ENCODE measurements at regions of chr22 and their contacts with region 1.

Region 1: DNA sequence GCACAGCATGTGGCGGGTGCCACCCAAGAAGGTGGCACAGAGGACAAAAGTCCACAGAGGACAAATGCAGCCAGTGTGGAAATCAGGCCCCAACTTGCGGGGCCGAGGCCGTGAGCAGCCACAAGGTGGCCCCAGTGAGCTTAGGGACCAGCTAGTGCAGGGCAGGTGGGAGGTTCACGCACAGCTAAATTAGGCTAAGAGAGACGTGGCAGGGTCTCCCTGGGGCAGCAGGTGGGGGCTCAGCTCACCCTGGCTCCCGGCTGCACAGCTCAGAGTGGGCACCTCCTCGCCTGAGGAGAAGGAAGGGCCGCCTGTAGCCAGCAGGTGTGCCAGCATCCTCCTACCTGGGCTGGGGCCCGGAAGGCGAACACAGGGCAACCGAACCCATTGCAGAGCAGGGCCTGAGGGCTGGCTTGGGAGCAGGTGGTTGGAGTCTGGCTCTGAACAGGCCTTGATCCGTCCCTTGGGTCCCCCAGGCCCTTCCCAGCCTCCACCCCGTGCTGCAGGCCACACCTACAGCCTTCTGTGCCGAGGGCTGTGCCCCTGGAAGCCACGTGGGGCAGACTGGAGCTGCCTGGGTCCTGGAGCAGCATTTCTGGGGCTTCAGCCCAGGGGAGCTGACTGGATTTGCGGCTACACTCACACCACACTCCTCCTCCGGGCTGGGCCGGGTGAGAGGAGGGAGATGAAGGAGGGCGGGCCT is 26.1 kb upstream of the CELSR1 start:
- DNase-seq: no peak
- H3K4me3 ChIP-seq: no peak overlapping the region
- CTCF ChIP-seq: peak; percentile 88

Region 2: DNA sequence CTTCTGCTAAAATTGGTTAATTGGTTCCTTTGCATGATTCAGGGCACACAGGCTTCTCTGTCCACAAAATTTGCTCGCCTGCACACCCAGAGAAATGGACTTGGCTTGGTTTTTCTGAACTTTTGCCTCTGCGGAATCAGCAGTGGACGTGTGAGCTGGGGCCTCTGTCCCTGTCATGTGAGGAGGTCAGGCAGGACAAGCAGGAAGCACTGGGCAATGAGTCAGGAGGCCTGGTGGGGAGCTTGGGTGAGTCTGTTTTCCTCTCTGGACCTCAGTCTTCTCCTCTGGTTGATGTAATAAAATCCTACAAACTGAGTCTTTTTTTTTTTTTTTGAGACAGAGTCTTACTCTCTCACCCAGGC is 15.7 kb before region 1 on chr22:
- CTCF ChIA-PET with region 1: interaction called, 50 read pairs
- POLR2A ChIA-PET with region 1: no interaction called
- DNase-seq: peak; percentile 45
- H3K4me3 ChIP-seq: no peak overlapping the region
- CTCF ChIP-seq: no peak

Region 3: GRCh38 chr22:46574966-46575910 is 11.7 kb after region 1 on chr22:
- CTCF ChIA-PET with region 1: interaction called, 16 read pairs
- POLR2A ChIA-PET with region 1: no interaction called
- DNase-seq: no peak
- H3K4me3 ChIP-seq: no peak overlapping the region
- CTCF ChIP-seq: no peak

Region 4: GRCh38 chr22:46581262-46582244 is 18.0 kb after region 1 on chr22:
- CTCF ChIA-PET with region 1: interaction called, 16 read pairs
- POLR2A ChIA-PET with region 1: interaction called, 3 read pairs
- DNase-seq: no peak
- H3K4me3 ChIP-seq: no peak overlapping the region
- CTCF ChIP-seq: no peak

Measured in AG04449 (cell line).